AG04450 (cell line): ENCODE measurements at regions of chr10 and their contacts with region 1.

Region 1: GRCh38 chr10:28381903-28382347 is 79.1 kb upstream of the MPP7 start:
- DNase-seq: peak; percentile 81
- H3K4me3 ChIP-seq: no peak overlapping the region
- H3K27ac ChIP-seq: no peak overlapping the region
- H3K27me3 ChIP-seq: peaks cover 12% of the 10 kb centered on the region
- CTCF ChIP-seq: peak; percentile 99

Region 2: GRCh38 chr10:27742195-27743011 is 639.5 kb before region 1 on chr10:
- CTCF ChIA-PET with region 1: interaction called, 11 read pairs
- POLR2A ChIA-PET with region 1: no interaction called
- DNase-seq: peak; percentile 68
- H3K4me3 ChIP-seq: peak overlapping the region; percentile 57
- H3K27ac ChIP-seq: peak overlapping the region; percentile 88
- H3K27me3 ChIP-seq: peaks cover 54% of the 10 kb centered on the region
- CTCF ChIP-seq: peak; percentile 74

Region 3: DNA sequence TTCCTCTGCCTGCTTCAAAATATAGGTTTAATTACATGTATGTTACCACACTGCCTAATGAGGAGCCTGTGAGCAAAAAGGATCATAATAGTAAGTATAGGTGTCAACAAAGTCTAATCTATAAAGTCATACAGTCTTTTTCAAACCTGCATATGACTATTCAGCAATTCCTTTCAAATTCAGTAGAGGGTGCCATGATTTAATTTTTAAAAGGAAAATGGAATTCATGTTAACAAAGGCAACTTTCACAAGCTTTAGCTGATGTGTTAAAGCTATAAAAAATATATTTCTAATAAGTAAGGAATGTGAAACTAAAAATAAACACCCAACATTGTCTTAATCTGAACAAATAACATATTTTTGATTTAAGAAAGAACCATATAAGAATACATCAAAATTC is 131.1 kb before region 1 on chr10:
- CTCF ChIA-PET with region 1: interaction called, 137 read pairs
- POLR2A ChIA-PET with region 1: interaction called, 6 read pairs
- DNase-seq: no peak
- H3K4me3 ChIP-seq: no peak overlapping the region
- H3K27ac ChIP-seq: no peak overlapping the region
- H3K27me3 ChIP-seq: peaks cover 11% of the 10 kb centered on the region
- CTCF ChIP-seq: peak; percentile 51

Region 4: GRCh38 chr10:28302638-28303488 is 79.1 kb before region 1 on chr10 and contains the start of gene MPP7:
- CTCF ChIA-PET with region 1: interaction called, 14 read pairs
- POLR2A ChIA-PET with region 1: no interaction called
- DNase-seq: peak; percentile 96
- H3K4me3 ChIP-seq: peak within 1 kb of the TSS; percentile 65
- H3K27ac ChIP-seq: no peak within 1 kb of the TSS
- H3K27me3 ChIP-seq: peaks cover 43% of the 10 kb centered on the region
- CTCF ChIP-seq: peak; percentile 19
- polyA plus RNA-seq, gene MPP7: 0.61 and 0.94 TPM in 2 replicates

Region 5: DNA sequence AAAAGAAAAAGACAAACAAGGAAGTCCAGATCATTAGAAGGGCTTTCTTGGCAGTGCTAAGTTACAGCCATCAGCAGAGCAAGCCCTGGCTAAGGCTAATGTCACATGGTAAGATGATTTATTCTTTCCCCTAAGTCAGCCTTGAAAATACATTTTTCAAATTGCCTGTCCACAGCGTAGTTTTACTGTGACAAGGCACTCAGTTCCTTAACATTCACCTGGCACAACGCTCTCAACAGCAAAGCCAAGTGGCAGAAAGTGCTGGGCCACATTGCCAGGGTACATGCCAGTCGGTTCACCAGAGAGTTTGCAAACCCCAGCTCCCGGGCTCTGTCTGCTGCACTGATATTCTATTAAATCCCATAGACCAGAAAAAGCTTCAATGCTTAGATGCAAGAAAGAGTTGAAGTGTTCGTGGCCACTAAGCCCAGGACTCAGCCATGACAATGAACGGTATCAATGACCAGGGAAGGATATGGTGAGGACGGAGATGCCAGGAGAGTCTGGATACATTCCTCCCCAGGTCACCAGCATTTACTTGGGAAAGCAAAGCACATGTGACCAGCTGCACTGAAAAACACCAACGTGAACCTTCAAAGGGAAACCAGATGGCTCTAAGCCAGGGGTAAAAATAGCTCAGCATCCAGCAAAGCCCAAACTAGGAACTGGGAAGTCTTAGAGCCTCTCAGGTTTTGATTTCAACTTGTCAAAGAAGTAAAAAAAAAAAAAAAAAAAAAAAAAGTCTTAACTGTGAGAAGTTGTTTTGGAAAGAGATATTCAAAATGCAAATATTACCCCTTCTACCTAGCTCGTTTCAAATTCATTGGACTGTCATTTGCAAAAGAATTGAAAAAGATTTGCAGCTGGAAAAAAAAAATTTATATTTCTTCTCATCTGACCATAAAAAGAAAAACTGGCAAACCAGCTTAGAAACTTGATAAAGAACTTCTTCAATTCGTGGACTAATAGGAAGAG is 55.1 kb before region 1 on chr10:
- CTCF ChIA-PET with region 1: interaction called, 19 read pairs
- POLR2A ChIA-PET with region 1: no interaction called
- DNase-seq: no peak
- H3K4me3 ChIP-seq: no peak overlapping the region
- H3K27ac ChIP-seq: no peak overlapping the region
- H3K27me3 ChIP-seq: no peaks in the 10 kb centered on the region
- CTCF ChIP-seq: no peak

Region 6: DNA sequence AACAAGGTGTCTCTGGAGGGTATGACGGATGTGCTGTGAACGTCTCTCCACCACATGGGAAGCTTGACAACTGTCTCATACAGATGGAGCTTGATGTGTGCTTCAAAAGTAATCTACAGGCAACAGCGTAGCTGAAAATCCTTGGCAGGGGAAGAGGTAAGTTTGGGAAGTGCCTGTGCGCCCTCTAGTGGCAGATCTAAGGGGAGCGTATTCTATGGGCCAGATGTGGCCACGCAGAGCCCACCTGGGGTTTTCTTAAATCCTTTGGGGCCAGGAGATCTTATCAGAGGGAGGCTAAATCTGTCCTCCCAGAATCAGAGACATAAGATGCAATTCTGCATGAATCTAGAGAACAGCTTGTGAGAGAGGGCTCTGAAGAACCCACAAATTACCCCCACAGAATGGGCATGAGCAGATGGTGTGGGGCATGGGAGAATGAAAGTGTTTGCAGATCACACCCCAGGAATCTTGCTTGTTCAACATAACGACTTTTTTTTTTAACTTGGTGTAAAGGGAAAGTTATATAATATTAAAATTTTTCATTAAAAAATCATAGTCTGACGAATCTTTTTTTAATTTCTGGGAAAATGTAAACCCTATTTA is 12.1 kb after region 1 on chr10:
- CTCF ChIA-PET with region 1: interaction called, 39 read pairs
- POLR2A ChIA-PET with region 1: no interaction called
- DNase-seq: peak; percentile 34
- H3K4me3 ChIP-seq: no peak overlapping the region
- H3K27ac ChIP-seq: no peak overlapping the region
- H3K27me3 ChIP-seq: peaks cover 2% of the 10 kb centered on the region
- CTCF ChIP-seq: peak; percentile 97